PC-3 (cell line): ENCODE measurements at regions of chr9 and their contacts with region 1.

Region 1: GRCh38 chr9:26477963-26478362 is 414.6 kb downstream of the CAAP1 start:
- DNase-seq: no peak
- ATAC-seq: no peak
- H3K4me3 ChIP-seq: no peak overlapping the region
- H3K27ac ChIP-seq: no peak overlapping the region
- H3K4me1 ChIP-seq: no peaks in the 10 kb centered on the region
- H3K27me3 ChIP-seq: peaks cover 20% of the 10 kb centered on the region
- CTCF ChIP-seq: no peak

Region 2: GRCh38 chr9:27888661-27889295 is 1410.8 kb after region 1 on chr9:
- CTCF ChIA-PET with region 1: interaction called, 12 read pairs
- POLR2A ChIA-PET with region 1: no interaction called
- intact Hi-C with region 1: no loop called
- DNase-seq: peak; percentile 60
- ATAC-seq: no peak
- H3K4me3 ChIP-seq: no peak overlapping the region
- H3K27ac ChIP-seq: no peak overlapping the region
- H3K4me1 ChIP-seq: no peaks in the 10 kb centered on the region
- H3K27me3 ChIP-seq: peaks cover 20% of the 10 kb centered on the region
- CTCF ChIP-seq: peak; percentile 75